Spleen (tissue), 13 donors: ENCODE measurements at regions of chr9 and their contacts with region 1.

Region 1: GRCh38 chr9:136488247-136489214 is 5.7 kb upstream of the SEC16A start:
- DNase-seq: peak; percentile 94
- H3K4me3 ChIP-seq: no peak overlapping the region
- H3K27ac ChIP-seq: peak overlapping the region in 7 of 8 donors; percentile 2 to 59 (median 44)
- H3K4me1 ChIP-seq: peaks cover 25 to 65% (median 52%) of the 10 kb centered on the region in 6 donors
- H3K27me3 ChIP-seq: no peaks in the 10 kb centered on the region
- CTCF ChIP-seq: peak; percentile 97 to 99 (median 98)
- POLR2A ChIP-seq: no peak

Region 2: DNA sequence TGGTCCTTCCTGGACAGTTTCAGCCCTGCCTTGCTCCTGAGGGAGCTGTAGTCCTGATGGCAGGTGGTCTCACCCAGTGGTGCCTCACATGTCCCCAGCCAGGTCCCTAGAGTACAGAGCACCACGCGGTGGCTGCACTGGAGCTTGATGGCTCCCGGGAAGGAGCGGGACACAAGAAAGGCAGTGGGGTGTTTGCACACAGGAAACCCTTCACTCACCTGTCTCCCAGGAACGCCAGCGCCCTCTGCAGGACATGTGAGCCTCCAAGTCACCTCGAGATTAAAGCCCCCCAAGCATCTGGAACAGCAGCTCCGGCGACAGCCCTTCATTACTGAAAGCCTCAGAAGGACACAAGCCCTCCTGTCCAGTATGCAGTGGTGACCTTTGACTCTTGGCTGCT is 350.0 kb before region 1 on chr9:
- intact Hi-C with region 1: no loop called
- DNase-seq: no peak
- H3K4me3 ChIP-seq: no peak overlapping the region
- H3K27ac ChIP-seq: no peak overlapping the region
- H3K4me1 ChIP-seq: peaks cover 0 to 27% (median 13%) of the 10 kb centered on the region in 6 donors
- H3K27me3 ChIP-seq: peaks cover 0 to 79% (median 40%) of the 10 kb centered on the region in 7 donors
- CTCF ChIP-seq: peak in 2 of 11 experiments; percentile 16 to 22
- POLR2A ChIP-seq: no peak

Region 3: GRCh38 chr9:136631038-136632000 is 142.8 kb after region 1 on chr9:
- intact Hi-C with region 1: loop called (anchors 2 kb)
- DNase-seq: peak; percentile 92
- H3K4me3 ChIP-seq: no peak overlapping the region
- H3K27ac ChIP-seq: peak overlapping the region in 1 of 8 donors; percentile 21
- H3K4me1 ChIP-seq: peaks cover 7 to 69% (median 42%) of the 10 kb centered on the region in 6 donors
- H3K27me3 ChIP-seq: peaks cover 0 to 50% (median 4%) of the 10 kb centered on the region in 7 donors
- CTCF ChIP-seq: peak; percentile 80 to 99 (median 93)
- POLR2A ChIP-seq: peak in 1 of 3 donors; percentile 14